ENCODE measurements at regions of chr19 and their contacts with region 1.

Region 1: DNA sequence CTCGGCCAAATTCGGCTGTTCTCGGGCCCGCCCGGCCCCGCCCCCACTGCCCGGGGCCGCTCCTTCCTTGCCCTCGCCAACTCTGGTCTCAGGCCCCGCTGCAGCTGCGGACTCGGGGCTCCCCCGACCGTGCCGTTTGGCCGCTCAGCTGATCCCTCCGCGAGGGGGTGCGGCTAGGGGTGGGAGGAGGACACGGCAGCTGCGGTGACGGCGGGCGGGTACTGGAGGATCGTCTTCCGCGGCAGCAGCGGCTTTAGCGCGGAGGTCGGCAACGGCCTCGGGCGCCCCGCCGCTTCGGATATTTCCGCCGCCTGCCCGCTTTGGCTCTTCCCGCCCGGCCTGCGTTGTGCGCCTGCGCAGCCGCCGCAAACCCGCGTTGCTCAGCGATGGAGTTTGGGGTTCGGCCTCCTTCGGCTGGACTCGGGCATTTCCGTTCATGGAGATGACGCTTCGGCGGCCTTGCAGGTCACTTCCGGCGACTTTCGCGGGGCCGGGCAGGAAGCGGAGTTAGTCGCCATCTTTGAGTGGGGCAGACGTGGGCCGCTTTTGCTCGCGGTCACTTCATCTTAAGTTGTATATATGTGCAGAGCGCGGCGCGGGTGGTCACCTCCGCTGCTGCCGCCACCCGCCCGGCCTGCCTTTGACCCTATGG is 338 bp upstream of the UBE2M start:
- DNase-seq: peak; percentile 98 to 99 (median 99)
- H3K4me3 ChIP-seq: peak overlapping the region; percentile 57 to 94 (median 84)
- H3K27ac ChIP-seq: peak overlapping the region; percentile 91 to 97
- H3K4me1 ChIP-seq: peaks cover 5 to 76% (median 69%) of the 10 kb centered on the region in 4 experiments
- H3K27me3 ChIP-seq: peaks cover 0 to 12% (median 0%) of the 10 kb centered on the region in 5 experiments

Region 2: GRCh38 chr19:58252102-58252685 is 306.6 kb before region 1 on chr19:
- CTCF ChIA-PET with region 1: no interaction called
- POLR2A ChIA-PET with region 1: no interaction called
- DNase-seq: peak in 2 of 3 donors; percentile 52 to 55
- H3K4me3 ChIP-seq: peak overlapping the region in 1 of 7 experiments; percentile 31
- H3K27ac ChIP-seq: no peak overlapping the region
- H3K4me1 ChIP-seq: no peaks in the 10 kb centered on the region
- H3K27me3 ChIP-seq: no peaks in the 10 kb centered on the region

Region 3: DNA sequence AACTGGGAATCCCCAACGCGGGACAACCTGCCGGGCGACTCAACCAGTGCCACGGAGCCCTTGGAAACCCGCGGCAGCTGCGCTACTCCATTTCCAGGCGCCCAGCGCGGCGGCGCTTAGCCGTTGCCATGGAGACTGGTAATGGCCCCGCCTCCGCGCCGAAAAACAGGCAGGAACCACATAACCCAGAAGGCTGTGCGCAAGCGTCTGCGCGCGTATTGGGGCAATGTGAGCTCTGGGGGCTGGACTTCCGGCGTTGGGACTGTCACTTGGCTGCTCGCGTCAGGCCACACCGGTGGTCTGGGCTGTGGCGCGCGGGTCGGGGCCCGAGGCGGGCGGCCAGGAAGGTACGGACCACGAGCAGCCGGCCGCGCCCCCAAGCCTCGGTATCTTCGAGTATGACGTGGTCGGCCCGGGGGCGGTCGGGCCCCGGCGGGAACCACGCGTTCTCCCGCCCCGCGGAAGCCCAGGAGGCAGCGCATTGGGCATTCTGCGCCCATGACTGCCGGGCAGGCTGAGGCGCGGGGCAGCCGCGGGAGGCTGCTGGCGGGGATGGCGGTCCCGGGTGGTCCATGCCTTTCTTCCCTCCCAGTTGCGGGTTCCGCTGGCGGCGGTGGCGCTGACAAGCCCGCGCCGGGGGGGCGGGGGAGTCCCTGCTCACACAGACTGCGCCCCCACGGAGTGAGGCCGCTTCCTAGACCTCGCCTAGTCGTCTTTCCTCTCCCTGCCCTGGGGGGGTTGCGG is 107.2 kb before region 1 on chr19 and contains the start of gene ZNF324B:
- CTCF ChIA-PET with region 1: no interaction called
- POLR2A ChIA-PET with region 1: no interaction called
- DNase-seq: peak; percentile 96 to 97 (median 97)
- H3K4me3 ChIP-seq: peak within 1 kb of the TSS; percentile 55 to 86 (median 83)
- H3K27ac ChIP-seq: peak within 1 kb of the TSS in 1 of 2 experiments; percentile 54
- H3K4me1 ChIP-seq: peaks cover 0 to 13% (median 8%) of the 10 kb centered on the region in 4 experiments
- H3K27me3 ChIP-seq: peaks cover 0 to 9% (median 0%) of the 10 kb centered on the region in 5 experiments

Region 4: DNA sequence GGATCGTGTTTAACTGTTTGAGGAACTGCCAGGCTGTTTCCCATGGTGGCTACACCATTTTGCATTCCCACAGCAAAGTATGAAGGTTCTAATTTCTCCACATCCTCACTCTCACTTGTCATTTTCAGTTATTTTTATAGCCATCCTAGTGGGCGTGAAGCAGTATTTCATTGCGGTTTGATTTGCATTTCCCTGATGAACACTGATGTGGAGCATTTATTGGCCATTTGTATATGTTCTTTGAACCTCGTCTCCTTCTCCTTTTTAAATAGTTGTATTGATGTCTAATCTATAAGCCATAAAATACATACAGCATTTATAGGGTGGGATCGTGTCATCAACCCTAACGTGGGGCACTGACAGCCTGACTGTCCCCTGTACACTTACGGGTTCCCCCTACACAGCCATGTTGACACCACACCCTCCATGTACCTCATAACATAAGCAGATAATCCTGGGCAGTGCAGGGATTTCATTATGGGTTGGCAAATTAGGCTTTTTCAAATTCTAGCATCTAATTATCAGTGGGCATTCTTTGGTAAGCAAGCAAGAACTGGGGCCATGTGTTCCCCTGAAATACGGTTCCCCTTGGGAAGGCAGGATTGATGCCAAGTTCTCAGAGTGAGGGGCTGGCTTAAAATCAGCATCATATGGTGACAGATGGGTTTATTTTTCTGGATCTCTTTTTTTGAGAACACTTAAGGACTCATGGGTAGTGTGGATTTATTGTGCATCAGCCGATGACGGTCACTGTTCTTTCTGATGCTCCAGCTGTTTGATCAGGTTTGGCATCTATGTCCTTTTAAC is 27.5 kb before region 1 on chr19:
- CTCF ChIA-PET with region 1: no interaction called
- POLR2A ChIA-PET with region 1: no interaction called
- DNase-seq: no peak
- H3K4me3 ChIP-seq: no peak overlapping the region
- H3K27ac ChIP-seq: no peak overlapping the region
- H3K4me1 ChIP-seq: no peaks in the 10 kb centered on the region
- H3K27me3 ChIP-seq: peaks cover 0 to 2% (median 0%) of the 10 kb centered on the region in 5 experiments

Region 5: GRCh38 chr19:58543826-58544590 is 14.7 kb before region 1 on chr19 and contains the start of gene TRIM28:
- CTCF ChIA-PET with region 1: interaction called, 14 read pairs
- POLR2A ChIA-PET with region 1: interaction called, 18 read pairs
- DNase-seq: peak; percentile 99 to 100 (median 100)
- H3K4me3 ChIP-seq: peak within 1 kb of the TSS; percentile 88 to 99 (median 92)
- H3K27ac ChIP-seq: peak within 1 kb of the TSS; percentile 66 to 91
- H3K4me1 ChIP-seq: peaks cover 13 to 29% (median 24%) of the 10 kb centered on the region in 4 experiments
- H3K27me3 ChIP-seq: no peaks in the 10 kb centered on the region

Region 6: GRCh38 chr19:58581227-58582151 is 22.7 kb after region 1 on chr19:
- CTCF ChIA-PET with region 1: interaction called, 22 read pairs
- POLR2A ChIA-PET with region 1: no interaction called
- DNase-seq: peak; percentile 89 to 95 (median 93)
- H3K4me3 ChIP-seq: no peak overlapping the region
- H3K27ac ChIP-seq: peak overlapping the region in 1 of 2 experiments; percentile 25
- H3K4me1 ChIP-seq: peaks cover 0 to 4% (median 2%) of the 10 kb centered on the region in 4 experiments
- H3K27me3 ChIP-seq: no peaks in the 10 kb centered on the region

Measured in common myeloid progenitor, CD34-positive (primary cell).